Activated CD4-positive, alpha-beta T cell treated with anti-CD3 and anti-CD28 coated beads for 36 hours (primary cell): ENCODE measurements at regions of chr9 and their contacts with region 1.

Region 1: DNA sequence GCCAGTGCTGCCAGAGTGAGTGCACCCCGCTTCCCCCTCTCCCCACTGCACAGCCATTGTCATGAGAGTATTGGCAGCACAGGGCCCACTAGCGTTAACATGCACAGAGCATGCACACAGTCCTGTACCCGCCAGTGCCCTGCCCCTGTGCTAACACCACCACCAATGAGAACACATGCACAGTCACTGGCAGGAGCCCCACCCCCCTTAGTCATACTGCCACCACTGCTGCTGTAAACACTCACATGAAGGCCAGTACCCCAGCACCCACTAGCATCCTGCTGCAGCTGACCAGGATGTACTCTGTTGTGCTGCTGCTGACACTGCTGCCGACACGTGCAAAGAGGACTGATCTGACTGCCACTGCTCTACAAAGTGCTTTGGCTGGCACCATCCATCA is 19.5 kb upstream of the RANBP6 start:
- DNase-seq: peak; percentile 29
- ATAC-seq: peak; percentile 78
- H3K4me3 Mint-ChIP-seq: no peak overlapping the region
- H3K27ac Mint-ChIP-seq: no peak overlapping the region
- H3K4me1 Mint-ChIP-seq: no peaks in the 10 kb centered on the region
- H3K27me3 Mint-ChIP-seq: peaks cover 8% of the 10 kb centered on the region

Region 2: DNA sequence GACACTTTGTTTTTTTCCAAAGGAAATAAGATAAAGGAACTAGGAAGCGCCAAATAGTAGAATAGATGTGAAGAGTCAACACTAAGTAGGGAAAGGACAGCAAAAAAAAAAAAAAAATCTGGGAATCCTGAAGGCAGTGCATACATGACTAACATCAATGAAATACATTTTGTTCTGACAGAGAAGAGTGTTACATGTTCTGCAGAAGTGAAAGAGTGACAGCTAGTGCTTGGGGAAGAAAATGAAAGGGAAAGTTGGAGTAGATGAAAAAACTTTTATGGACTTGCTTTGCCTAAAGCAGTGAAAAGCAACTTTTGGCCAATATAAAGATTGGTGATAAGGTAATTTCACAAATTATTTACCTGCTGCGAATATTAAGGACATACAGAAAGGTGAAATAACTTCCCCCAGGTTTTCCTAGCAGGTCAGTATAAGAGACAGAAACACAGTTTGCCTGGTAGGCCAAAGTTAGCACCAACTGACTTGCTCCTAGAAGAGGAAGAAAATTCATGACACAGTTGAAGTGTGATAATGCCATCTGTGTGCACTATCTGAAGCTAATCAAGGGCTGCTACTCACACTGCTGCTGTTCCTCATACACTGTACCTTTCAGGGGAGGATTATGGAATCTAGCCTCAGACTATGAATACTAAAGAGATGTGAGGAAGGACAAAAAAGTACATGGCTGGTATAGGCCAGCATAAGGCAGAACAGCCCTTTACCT is 58.1 kb before region 1 on chr9:
- CTCF ChIA-PET with region 1: no interaction called
- POLR2A ChIA-PET with region 1: no interaction called
- intact Hi-C with region 1: no loop called
- DNase-seq: no peak
- ATAC-seq: peak; percentile 44
- H3K4me3 Mint-ChIP-seq: no peak overlapping the region
- H3K27ac Mint-ChIP-seq: peak overlapping the region; percentile 78
- H3K4me1 Mint-ChIP-seq: peaks cover 21% of the 10 kb centered on the region
- H3K27me3 Mint-ChIP-seq: no peaks in the 10 kb centered on the region

Region 3: DNA sequence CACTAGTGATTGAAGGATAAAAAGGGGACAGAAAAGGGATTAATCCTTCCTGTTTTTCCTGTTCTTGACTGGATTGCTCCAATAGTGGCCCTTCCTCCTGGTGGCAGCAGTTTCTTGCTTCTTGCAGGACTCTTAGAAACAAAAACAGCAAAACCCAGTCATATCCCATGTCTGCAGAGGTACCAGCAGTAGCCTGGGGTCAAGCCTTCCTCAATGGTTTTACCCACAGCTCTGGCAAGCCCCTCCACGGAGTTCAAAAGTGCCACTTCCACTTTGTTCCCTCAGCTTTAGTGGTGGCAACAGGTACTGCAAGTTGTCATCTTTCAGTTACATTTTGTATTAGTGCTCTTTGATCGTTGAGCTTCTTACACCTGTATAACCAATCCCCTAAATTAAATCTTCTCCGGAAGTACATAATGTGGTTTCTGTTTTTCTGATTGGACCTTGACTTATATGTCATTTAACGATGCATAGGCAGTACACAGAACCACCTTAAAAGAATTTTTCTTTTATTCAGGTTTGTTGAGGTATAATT is 10.9 kb before region 1 on chr9:
- CTCF ChIA-PET with region 1: interaction called, 10 read pairs
- POLR2A ChIA-PET with region 1: no interaction called
- intact Hi-C with region 1: no loop called
- DNase-seq: peak; percentile 28
- ATAC-seq: peak; percentile 39
- H3K4me3 Mint-ChIP-seq: no peak overlapping the region
- H3K27ac Mint-ChIP-seq: no peak overlapping the region
- H3K4me1 Mint-ChIP-seq: no peaks in the 10 kb centered on the region
- H3K27me3 Mint-ChIP-seq: peaks cover 10% of the 10 kb centered on the region

Region 4: GRCh38 chr9:6171667-6172066 is 136.7 kb after region 1 on chr9:
- CTCF ChIA-PET with region 1: no interaction called
- POLR2A ChIA-PET with region 1: no interaction called
- intact Hi-C with region 1: no loop called
- DNase-seq: no peak
- ATAC-seq: no peak
- H3K4me3 Mint-ChIP-seq: no peak overlapping the region
- H3K27ac Mint-ChIP-seq: no peak overlapping the region
- H3K4me1 Mint-ChIP-seq: no peaks in the 10 kb centered on the region
- H3K27me3 Mint-ChIP-seq: peaks cover 2% of the 10 kb centered on the region